ENCODE measurements at regions of chrX and their contacts with region 1.

Region 1: DNA sequence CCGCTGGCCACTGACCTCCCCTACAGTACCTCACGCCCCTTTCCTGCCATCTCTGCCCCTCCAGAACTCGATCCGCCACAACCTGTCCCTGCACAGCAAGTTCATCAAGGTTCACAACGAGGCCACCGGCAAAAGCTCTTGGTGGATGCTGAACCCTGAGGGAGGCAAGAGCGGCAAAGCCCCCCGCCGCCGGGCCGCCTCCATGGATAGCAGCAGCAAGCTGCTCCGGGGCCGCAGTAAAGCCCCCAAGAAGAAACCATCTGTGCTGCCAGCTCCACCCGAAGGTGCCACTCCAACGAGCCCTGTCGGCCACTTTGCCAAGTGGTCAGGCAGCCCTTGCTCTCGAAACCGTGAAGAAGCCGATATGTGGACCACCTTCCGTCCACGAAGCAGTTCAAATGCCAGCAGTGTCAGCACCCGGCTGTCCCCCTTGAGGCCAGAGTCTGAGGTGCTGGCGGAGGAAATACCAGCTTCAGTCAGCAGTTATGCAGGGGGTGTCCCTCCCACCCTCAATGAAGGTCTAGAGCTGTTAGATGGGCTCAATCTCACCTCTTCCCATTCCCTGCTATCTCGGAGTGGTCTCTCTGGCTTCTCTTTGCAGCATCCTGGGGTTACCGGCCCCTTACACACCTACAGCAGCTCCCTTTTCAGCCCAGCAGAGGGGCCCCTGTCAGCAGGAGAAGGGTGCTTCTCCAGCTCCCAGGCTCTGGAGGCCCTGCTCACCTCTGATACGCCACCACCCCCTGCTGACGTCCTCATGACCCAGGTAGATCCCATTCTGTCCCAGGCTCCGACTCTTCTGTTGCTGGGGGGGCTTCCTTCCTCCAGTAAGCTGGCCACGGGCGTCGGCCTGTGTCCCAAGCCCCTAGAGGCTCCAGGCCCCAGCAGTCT is 5.2 kb downstream of the FOXO4 start:
- DNase-seq: no peak
- H3K4me3 ChIP-seq: no peak overlapping the region
- CTCF ChIP-seq: no peak

Region 2: DNA sequence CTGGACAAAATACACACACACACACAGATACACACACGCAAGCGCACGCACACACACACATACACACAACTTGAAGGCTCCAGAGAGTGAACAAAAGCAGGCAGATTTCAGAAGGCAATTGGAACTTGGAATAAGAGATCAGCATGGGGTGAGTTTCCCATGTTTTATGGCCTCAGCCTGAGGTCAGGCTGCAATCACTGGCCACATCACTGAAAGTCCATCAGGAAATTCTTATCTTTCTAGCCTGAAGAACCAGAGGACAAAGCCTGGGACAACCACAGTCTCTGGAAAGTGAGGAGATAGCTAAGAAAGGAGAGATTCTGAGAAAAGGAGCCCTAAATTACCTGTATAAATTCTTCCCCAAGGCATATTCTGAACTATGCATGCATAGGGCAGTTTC is 24.4 kb before region 1 on chrX:
- CTCF ChIA-PET with region 1: no interaction called
- POLR2A ChIA-PET with region 1: no interaction called
- DNase-seq: no peak
- H3K4me3 ChIP-seq: no peak overlapping the region
- CTCF ChIP-seq: no peak

Region 3: DNA sequence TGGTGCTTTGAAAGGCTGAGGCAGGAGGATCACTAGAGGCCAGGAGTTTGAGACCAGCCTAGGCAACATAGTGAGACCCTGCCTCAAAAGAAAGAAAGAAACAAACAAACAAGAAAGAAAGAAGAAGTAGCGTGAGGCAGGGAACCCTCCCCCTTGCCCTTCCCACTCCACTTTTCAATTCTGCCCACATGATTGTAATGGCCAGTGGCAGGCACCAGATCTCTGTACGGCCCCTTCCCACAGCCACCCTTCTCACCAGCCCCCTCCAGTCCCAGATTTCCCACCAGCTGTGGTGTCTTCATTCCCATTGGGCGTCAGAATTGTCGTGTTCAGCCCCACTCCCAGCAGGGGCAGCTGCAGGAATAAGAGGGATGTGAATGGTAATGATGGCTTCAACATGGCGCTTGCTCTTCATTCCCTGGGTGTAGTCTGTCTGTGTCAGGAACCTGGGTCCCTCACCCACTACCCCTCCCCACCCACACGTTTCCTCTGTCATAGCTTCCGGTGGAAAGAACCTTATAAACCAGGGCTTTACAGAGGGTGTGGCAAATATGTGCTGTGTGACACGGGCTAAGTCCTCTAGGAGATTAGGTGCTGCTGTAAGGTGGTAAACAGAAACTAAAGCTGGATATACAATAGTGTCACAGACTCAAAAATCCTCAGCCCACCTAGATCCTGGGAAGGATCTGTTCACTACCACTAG is 10.4 kb after region 1 on chrX and contains the start of gene IL2RG:
- CTCF ChIA-PET with region 1: interaction called, 15 read pairs
- POLR2A ChIA-PET with region 1: no interaction called
- DNase-seq: no peak
- H3K4me3 ChIP-seq: no peak within 1 kb of the TSS
- CTCF ChIP-seq: no peak

Region 4: GRCh38 chrX:71118032-71118984 is 17.4 kb after region 1 on chrX and contains the start of gene MED12:
- CTCF ChIA-PET with region 1: interaction called, 15 read pairs
- POLR2A ChIA-PET with region 1: interaction called, 5 read pairs
- DNase-seq: no peak
- H3K4me3 ChIP-seq: peak within 1 kb of the TSS; percentile 62
- CTCF ChIP-seq: no peak